Spleen (tissue), 13 donors: ENCODE measurements at regions of chr1 and their contacts with region 1.

Region 1: DNA sequence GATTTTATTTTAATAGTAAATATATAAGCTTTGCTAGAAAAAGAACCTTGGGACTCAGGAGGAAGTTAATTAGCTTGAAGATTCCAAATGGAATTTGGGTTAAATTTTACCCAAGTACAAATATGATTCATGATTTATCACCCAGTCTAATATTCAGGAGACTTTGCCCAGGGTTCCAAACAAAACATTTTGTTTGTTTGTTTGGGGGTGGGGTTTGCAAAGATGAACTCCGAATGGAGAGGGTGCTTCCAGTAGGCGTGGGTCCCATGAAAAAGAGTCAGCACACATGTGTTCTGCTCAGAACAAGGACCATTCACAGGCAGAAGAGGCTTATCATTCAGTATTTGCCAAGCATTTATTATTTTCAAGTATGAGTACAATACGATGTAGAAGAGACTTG is 23.5 kb downstream of the KCNT2 start:
- DNase-seq: no peak
- H3K4me3 ChIP-seq: no peak overlapping the region
- H3K27ac ChIP-seq: no peak overlapping the region
- H3K4me1 ChIP-seq: no peaks in the 10 kb centered on the region
- H3K27me3 ChIP-seq: no peaks in the 10 kb centered on the region
- CTCF ChIP-seq: no peak
- POLR2A ChIP-seq: no peak

Region 2: GRCh38 chr1:196531737-196532524 is 52.8 kb before region 1 on chr1:
- intact Hi-C with region 1: loop called (anchors 5 kb)
- DNase-seq: no peak
- H3K4me3 ChIP-seq: no peak overlapping the region
- H3K27ac ChIP-seq: no peak overlapping the region
- H3K4me1 ChIP-seq: no peaks in the 10 kb centered on the region
- H3K27me3 ChIP-seq: no peaks in the 10 kb centered on the region
- CTCF ChIP-seq: no peak
- POLR2A ChIP-seq: no peak